Mammary epithelial cell (primary cell): ENCODE measurements at regions of chr10 and their contacts with region 1.

Region 1: GRCh38 chr10:21495752-21496342 is 29.6 kb downstream of the SKIDA1 start:
- DNase-seq: peak; percentile 83
- H3K4me3 ChIP-seq: peak overlapping the region; percentile 69 to 84 (median 80)
- H3K27ac ChIP-seq: no peak overlapping the region
- H3K4me1 ChIP-seq: peaks cover 15% of the 10 kb centered on the region
- H3K27me3 ChIP-seq: peaks cover 2% of the 10 kb centered on the region
- CTCF ChIP-seq: peak; percentile 64 to 81

Region 2: GRCh38 chr10:21078410-21079329 is 417.2 kb before region 1 on chr10:
- CTCF ChIA-PET with region 1: no interaction called
- dilution Hi-C with region 1: no loop called
- in situ Hi-C with region 1: loop called in 1 of 2 experiments (anchors 25 kb)
- intact Hi-C with region 1: loop called (anchors 2 kb)
- DNase-seq: peak; percentile 52
- H3K4me3 ChIP-seq: no peak overlapping the region
- H3K27ac ChIP-seq: no peak overlapping the region
- H3K4me1 ChIP-seq: no peaks in the 10 kb centered on the region
- H3K27me3 ChIP-seq: no peaks in the 10 kb centered on the region
- CTCF ChIP-seq: peak; percentile 81 to 82

Region 3: DNA sequence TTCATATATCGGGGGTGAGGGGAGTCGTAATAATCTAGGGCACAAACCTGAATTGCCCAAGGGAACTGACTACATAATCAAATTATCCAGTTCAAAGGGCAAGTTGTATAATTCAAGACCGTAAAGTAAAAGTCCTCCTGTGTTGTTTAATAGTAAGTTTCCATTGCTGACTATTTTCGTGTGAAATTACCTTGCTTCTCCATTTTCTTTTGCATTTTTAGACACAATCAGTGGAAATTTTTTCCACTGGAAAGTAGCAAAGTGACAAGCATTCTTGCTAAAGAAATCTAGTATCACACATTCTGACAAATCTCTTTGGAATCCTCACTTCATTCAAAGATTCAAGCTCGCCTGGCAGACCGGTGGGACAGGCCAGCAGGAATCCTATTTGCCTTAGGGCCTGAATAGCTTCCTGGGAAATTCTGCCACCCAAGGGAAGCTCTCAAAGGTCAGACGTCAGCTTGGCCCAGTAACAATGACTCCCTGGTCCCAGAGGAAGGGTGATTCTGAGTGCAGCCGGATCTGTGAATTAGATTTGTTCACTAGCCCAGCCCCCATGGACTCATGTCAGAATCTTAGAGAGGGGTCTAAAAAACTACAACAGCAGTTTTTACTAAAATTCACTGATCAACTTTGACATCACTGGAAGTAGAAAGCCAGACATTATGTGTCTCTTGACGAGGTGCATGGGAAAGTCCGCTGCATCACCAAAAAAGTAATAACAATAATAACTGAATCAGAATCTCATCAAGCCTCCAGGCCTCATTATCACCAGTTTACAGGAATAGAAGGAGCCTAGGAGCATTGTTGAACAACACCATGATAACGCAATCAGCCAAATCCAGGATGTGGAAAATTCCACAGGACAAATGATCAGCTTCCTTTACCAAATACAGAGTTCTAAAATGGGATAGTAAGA is 131.4 kb before region 1 on chr10:
- CTCF ChIA-PET with region 1: no interaction called
- dilution Hi-C with region 1: no loop called
- in situ Hi-C with region 1: no loop called
- intact Hi-C with region 1: loop called (anchors 2 kb)
- DNase-seq: peak; percentile 89
- H3K4me3 ChIP-seq: no peak overlapping the region
- H3K27ac ChIP-seq: peak overlapping the region; percentile 90
- H3K4me1 ChIP-seq: peaks cover 37% of the 10 kb centered on the region
- H3K27me3 ChIP-seq: no peaks in the 10 kb centered on the region
- CTCF ChIP-seq: no peak

Region 4: GRCh38 chr10:21732067-21732772 is 236.4 kb after region 1 on chr10:
- CTCF ChIA-PET with region 1: interaction called, 3 read pairs
- dilution Hi-C with region 1: no loop called
- in situ Hi-C with region 1: no loop called
- intact Hi-C with region 1: loop called (anchors 2 kb)
- DNase-seq: no peak
- H3K4me3 ChIP-seq: no peak overlapping the region
- H3K27ac ChIP-seq: no peak overlapping the region
- H3K4me1 ChIP-seq: peaks cover 6% of the 10 kb centered on the region
- H3K27me3 ChIP-seq: no peaks in the 10 kb centered on the region
- CTCF ChIP-seq: peak; percentile 55 to 57

Region 5: GRCh38 chr10:22003079-22003913 is 507.4 kb after region 1 on chr10 and contains the start of gene DNAJC1:
- CTCF ChIA-PET with region 1: no interaction called
- dilution Hi-C with region 1: no loop called
- in situ Hi-C with region 1: no loop called
- intact Hi-C with region 1: loop called (anchors 5 kb)
- DNase-seq: peak; percentile 92
- H3K4me3 ChIP-seq: peak within 1 kb of the TSS; percentile 70 to 96 (median 92)
- H3K27ac ChIP-seq: peak within 1 kb of the TSS; percentile 87
- H3K4me1 ChIP-seq: peaks cover 6% of the 10 kb centered on the region
- H3K27me3 ChIP-seq: peaks cover 3% of the 10 kb centered on the region
- CTCF ChIP-seq: no peak
- total RNA-seq, gene DNAJC1: 33.0 to 56.5 TPM

Region 6: GRCh38 chr10:22988581-22989360 is 1492.9 kb after region 1 on chr10:
- CTCF ChIA-PET with region 1: no interaction called
- dilution Hi-C with region 1: no loop called
- in situ Hi-C with region 1: no loop called
- intact Hi-C with region 1: loop called (anchors 1 kb)
- DNase-seq: peak; percentile 44
- H3K4me3 ChIP-seq: no peak overlapping the region
- H3K27ac ChIP-seq: no peak overlapping the region
- H3K4me1 ChIP-seq: no peaks in the 10 kb centered on the region
- H3K27me3 ChIP-seq: peaks cover 2% of the 10 kb centered on the region
- CTCF ChIP-seq: peak; percentile 85 to 91